A549 (cell line): ENCODE measurements at regions of chr10 and their contacts with region 1.

Region 1: GRCh38 chr10:13776861-13777311 is 190.1 kb downstream of the PRPF18 start:
- DNase-seq: no peak
- ATAC-seq: no peak
- H3K4me3 ChIP-seq: no peak overlapping the region
- H3K27ac ChIP-seq: no peak overlapping the region
- H3K4me1 ChIP-seq: no peaks in the 10 kb centered on the region
- CTCF ChIP-seq: no peak
- EP300 ChIP-seq: no peak
- POLR2A ChIP-seq: no peak
- RAD21 ChIP-seq: no peak

Region 2: DNA sequence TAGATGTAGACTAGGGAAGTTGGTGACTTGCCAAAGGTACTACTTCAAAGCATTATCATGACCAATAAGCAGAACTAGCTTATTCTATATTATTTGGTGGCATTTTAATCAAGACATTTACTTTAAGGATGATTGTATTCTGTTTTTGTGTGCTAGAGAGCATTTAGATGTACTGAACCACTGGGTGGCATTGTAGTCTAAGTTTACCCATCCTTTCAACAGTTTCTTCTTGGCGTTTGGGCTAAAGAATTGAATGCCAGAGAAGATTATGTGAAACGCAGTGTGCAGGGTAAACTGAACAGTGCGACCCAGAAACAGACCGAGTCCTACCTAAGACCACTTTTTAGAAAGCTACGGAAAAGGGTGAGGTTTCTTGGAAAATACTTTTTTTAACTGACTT is 163.4 kb before region 1 on chr10:
- CTCF ChIA-PET with region 1: interaction called, 32 read pairs
- POLR2A ChIA-PET with region 1: no interaction called
- DNase-seq: peak; percentile 13 to 30
- ATAC-seq: peak; percentile 44 to 74; a peak in 2 of 6 replicates
- H3K4me3 ChIP-seq: no peak overlapping the region
- H3K27ac ChIP-seq: no peak overlapping the region
- H3K4me1 ChIP-seq: no peaks in the 10 kb centered on the region
- CTCF ChIP-seq: peak; percentile 56
- EP300 ChIP-seq: no peak
- POLR2A ChIP-seq: no peak
- RAD21 ChIP-seq: peak; percentile 58 to 59

Region 3: GRCh38 chr10:13669182-13669865 is 107.6 kb before region 1 on chr10:
- CTCF ChIA-PET with region 1: interaction called, 14 read pairs
- POLR2A ChIA-PET with region 1: no interaction called
- DNase-seq: no peak
- ATAC-seq: no peak
- H3K4me3 ChIP-seq: no peak overlapping the region
- H3K27ac ChIP-seq: no peak overlapping the region
- H3K4me1 ChIP-seq: peaks cover 6% of the 10 kb centered on the region; the same call in 1 of the 3 replicates
- CTCF ChIP-seq: no peak
- EP300 ChIP-seq: no peak
- POLR2A ChIP-seq: no peak
- RAD21 ChIP-seq: no peak